OCI-LY7 (cell line): ENCODE measurements at regions of chr3 and their contacts with region 1.

Region 1: GRCh38 chr3:193665370-193665989 is 72.5 kb downstream of the OPA1 start:
- DNase-seq: peak; percentile 58
- H3K4me3 ChIP-seq: no peak overlapping the region
- H3K27ac ChIP-seq: no peak overlapping the region
- H3K4me1 ChIP-seq: no peaks in the 10 kb centered on the region
- CTCF ChIP-seq: peak; percentile 91

Region 2: GRCh38 chr3:193780810-193781472 is 115.5 kb after region 1 on chr3:
- CTCF ChIA-PET with region 1: interaction called, 4 read pairs
- POLR2A ChIA-PET with region 1: interaction called, 3 read pairs
- intact Hi-C with region 1: loop called (anchors 2 kb)
- DNase-seq: peak; percentile 64
- H3K4me3 ChIP-seq: no peak overlapping the region
- H3K27ac ChIP-seq: no peak overlapping the region
- H3K4me1 ChIP-seq: peaks cover 20% of the 10 kb centered on the region
- CTCF ChIP-seq: peak; percentile 90

Region 3: GRCh38 chr3:194315088-194315964 is 649.8 kb after region 1 on chr3:
- CTCF ChIA-PET with region 1: interaction called, 4 read pairs
- POLR2A ChIA-PET with region 1: no interaction called
- intact Hi-C with region 1: loop called (anchors 5 kb)
- DNase-seq: peak; percentile 66
- H3K4me3 ChIP-seq: no peak overlapping the region
- H3K27ac ChIP-seq: no peak overlapping the region
- H3K4me1 ChIP-seq: no peaks in the 10 kb centered on the region
- CTCF ChIP-seq: peak; percentile 89

Region 4: DNA sequence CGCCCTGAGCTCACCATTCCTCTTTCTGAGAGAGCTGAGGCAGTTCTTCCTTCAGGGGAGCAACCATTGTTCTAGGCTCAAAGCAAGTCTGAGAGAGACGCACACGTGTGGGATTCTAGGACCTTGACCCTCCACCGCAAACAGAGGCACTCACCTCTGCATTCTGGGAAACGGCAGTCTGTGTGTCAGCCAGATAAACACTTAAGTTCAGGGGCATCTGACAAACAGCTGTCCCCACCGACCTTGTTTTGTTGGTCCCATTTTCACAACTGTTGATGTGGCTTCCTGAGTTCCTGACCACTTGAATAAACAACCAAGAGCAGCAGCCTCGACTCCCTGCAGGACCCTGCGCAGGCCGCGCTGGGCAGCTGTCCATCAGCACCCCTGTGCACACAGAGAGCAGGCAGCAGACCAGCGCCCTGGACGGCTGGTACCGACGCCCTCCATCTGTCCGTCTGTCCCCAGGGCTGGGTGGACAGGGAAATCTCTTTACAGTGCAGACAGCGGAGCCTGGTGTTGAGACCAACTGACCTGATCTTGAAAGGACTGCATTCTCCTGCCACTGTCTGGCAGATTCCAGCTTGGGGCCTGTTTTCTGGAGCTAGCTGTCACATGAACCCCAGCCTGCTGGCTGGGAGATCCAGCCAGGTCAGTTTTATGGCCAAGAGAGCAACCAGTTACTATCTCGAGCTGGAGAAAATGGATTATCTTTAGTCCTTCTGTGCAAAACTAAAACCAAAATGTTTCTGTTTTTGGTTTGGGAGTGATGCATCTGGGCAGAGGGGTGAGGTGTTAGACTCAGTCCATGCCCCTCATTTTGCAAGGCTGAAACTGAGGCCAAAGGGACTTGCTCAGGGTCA is 1084.4 kb after region 1 on chr3:
- CTCF ChIA-PET with region 1: no interaction called
- POLR2A ChIA-PET with region 1: no interaction called
- intact Hi-C with region 1: no loop called
- DNase-seq: no peak
- H3K4me3 ChIP-seq: no peak overlapping the region
- H3K27ac ChIP-seq: no peak overlapping the region
- H3K4me1 ChIP-seq: no peaks in the 10 kb centered on the region
- CTCF ChIP-seq: no peak